Sigmoid colon (tissue), 7 donors: ENCODE measurements at regions of chr3 and their contacts with region 1.

Region 1: GRCh38 chr3:129942296-129942695 is 32.2 kb upstream of the TRH start:
- DNase-seq: no peak
- H3K4me3 ChIP-seq: no peak overlapping the region
- H3K27ac ChIP-seq: no peak overlapping the region
- H3K4me1 ChIP-seq: no peaks in the 10 kb centered on the region
- H3K27me3 ChIP-seq: no peaks in the 10 kb centered on the region
- CTCF ChIP-seq: peak; percentile 32 to 63 (median 54)
- EP300 ChIP-seq: no peak
- POLR2A ChIP-seq: no peak

Region 2: DNA sequence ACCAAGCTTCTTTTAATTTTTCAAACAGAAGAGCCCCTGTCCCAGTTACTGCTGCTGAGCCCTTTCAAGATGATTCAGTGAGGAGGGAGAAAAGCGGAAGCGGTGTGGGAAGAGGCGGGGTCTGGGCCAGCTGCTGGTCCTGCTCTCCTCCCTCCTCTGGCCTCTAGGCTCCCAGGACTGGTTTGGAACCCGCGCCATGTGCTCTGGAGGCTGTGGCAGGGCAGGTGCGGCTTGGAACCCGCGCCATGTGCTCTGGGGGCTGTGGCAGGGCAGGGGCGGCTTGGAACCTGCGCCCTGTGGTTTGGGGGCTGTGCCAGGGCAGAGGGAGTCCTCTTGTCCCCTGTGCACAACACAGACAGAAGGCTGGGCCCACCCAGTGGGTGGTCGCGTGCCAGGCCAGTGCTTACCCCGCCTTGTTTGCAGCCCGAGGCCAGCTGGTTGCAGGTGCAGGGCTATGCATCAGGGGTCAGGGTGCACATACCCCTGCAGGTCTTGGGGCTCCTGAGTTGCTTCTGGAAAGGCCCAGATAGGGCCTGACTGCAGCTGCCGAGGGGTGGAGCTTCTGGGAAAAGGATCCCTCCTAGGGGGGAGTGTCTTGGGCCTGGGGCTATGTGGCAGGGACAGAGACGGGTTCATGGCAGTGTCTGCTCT is 151.6 kb after region 1 on chr3:
- intact Hi-C with region 1: loop called (anchors 10 kb)
- DNase-seq: no peak
- H3K4me3 ChIP-seq: no peak overlapping the region
- H3K27ac ChIP-seq: no peak overlapping the region
- H3K4me1 ChIP-seq: no peaks in the 10 kb centered on the region
- H3K27me3 ChIP-seq: peaks cover 2 to 12% (median 7%) of the 10 kb centered on the region in 3 donors
- CTCF ChIP-seq: no peak
- EP300 ChIP-seq: no peak
- POLR2A ChIP-seq: no peak